SK-N-SH (cell line): ENCODE measurements at regions of chr1 and their contacts with region 1.

Region 1: DNA sequence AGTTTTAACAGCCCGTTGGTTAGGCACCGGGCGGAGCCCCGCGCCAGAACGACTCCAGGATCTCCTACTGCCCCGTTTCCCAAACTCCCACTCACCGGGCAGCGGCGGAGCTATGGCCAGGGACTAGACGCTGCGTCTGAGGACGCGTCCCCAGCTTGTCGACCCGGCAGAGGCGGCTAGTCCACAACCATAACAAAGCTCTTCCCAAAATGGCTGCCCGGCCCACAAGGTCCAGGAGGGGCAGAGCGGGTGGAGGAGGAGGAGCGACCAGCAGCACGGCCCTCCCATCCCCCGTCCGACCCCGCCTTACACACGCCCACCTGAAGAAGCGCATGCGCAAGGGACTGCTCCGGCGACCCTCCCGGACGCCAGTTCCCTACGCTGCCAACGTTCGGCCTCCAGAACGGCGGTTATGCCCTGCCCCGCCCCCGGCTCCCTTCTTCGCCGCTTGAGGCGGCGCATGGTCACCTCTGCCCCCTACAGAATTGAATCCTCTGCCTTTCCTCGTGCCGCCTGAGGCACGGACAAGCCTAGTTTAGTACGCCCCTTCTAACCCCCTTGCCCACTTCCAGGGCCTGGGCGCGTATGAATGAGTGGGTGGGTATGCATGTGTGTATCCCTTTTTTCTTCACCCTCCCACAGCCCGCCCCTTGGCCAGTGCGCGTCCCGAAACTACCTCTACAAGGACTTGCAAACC is at the start of gene GPBP1L1:
- DNase-seq: peak; percentile 99
- H3K4me3 ChIP-seq: peak within 1 kb of the TSS; percentile 92 to 95
- H3K27ac ChIP-seq: peak within 1 kb of the TSS; percentile 93 to 97
- H3K4me1 ChIP-seq: peaks cover 14 to 20% of the 10 kb centered on the region in 2 experiments; a peak in 3 of 4 replicates
- H3K27me3 ChIP-seq: no peaks in the 10 kb centered on the region
- CTCF ChIP-seq: no peak
- EP300 ChIP-seq: no peak
- RAD21 ChIP-seq: no peak
- polyA plus RNA-seq, gene GPBP1L1: 28.5 and 38.1 TPM in 2 replicates

Region 2: GRCh38 chr1:45583264-45583665 is 103.2 kb before region 1 on chr1:
- CTCF ChIA-PET with region 1: no interaction called
- POLR2A ChIA-PET with region 1: interaction called, 20 read pairs
- DNase-seq: peak; percentile 95
- H3K4me3 ChIP-seq: peak overlapping the region; percentile 76 to 97
- H3K27ac ChIP-seq: peak overlapping the region; percentile 62 to 90
- H3K4me1 ChIP-seq: peaks cover 5 to 9% of the 10 kb centered on the region in 2 experiments; a peak in 3 of 4 replicates
- H3K27me3 ChIP-seq: no peaks in the 10 kb centered on the region
- CTCF ChIP-seq: no peak
- EP300 ChIP-seq: no peak
- RAD21 ChIP-seq: no peak